ENCODE measurements at regions of chr15 and their contacts with region 1.

Region 1: DNA sequence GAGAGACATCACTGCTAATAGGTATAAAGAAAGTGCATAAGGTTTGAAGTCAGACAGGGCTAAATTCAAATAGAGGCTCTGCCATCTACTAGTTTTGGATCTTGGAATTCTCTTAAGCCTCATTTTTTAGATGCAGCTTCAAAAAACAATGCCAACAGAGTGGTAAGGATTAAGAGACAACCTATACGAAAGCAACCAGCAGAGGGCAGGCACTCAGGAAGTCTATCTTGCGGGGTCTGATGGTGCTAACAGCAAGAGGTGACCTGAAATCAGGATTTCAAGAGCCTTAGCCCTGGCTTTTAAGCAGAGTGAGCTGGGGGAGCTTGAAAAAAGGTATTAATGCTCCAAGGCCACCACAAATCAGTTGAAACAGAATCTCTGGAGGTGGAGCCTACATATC is 40.7 kb downstream of the LDHAL6B start:
- DNase-seq: no peak
- ATAC-seq: peak; percentile 52
- H3K4me3 Mint-ChIP-seq: no peak overlapping the region
- H3K27ac Mint-ChIP-seq: peak overlapping the region; percentile 24
- H3K4me1 Mint-ChIP-seq: peaks cover 71% of the 10 kb centered on the region
- H3K27me3 Mint-ChIP-seq: no peaks in the 10 kb centered on the region
- CTCF ChIP-seq: no peak

Region 2: GRCh38 chr15:58357521-58358476 is 889.6 kb before region 1 on chr15:
- CTCF ChIA-PET with region 1: no interaction called
- POLR2A ChIA-PET with region 1: no interaction called
- intact Hi-C with region 1: no loop called
- DNase-seq: no peak
- ATAC-seq: no peak
- H3K4me3 Mint-ChIP-seq: no peak overlapping the region
- H3K27ac Mint-ChIP-seq: no peak overlapping the region
- H3K4me1 Mint-ChIP-seq: no peaks in the 10 kb centered on the region
- H3K27me3 Mint-ChIP-seq: peaks cover 23% of the 10 kb centered on the region
- CTCF ChIP-seq: no peak

Region 3: DNA sequence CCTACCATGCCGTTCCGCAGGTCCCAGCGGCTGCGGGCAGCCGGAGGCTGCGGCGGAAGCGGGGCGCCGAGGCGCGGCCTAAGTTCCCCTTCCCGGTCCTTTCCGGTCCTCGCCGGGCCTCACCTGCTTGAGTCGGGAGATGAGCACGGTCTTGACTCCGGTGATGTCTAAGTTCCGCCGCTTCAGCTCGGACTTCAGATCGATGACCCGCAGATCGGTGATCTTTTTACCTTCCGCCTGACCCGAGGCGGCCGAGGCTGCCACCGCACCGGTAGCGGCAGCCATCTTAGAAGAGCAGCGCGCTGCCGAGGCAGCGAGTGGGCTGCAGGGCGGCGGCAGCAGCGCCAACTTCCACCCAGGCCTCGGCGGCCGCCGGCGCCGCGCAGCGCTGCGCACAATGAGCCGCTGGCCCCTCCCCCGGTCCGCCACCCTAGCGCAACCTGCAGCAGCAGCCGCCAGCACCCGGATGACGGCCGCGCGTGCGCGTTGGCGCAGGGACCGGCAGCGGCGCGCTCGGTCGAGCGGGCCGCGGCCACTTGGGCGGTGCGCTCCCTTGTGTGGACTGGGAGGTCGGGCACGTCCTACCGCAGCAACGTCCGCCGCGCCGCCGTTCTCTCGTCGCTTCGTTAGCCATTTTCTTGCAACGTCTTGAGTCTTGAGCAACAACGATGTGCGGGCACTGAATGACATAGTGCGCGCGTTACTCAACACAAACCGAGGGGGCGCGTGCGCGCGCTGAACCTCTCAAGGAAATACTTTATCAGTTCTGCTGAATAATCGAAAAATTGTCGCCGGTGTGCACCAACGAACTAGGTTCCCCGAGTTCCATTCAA is 313.9 kb before region 1 on chr15 and contains the start of gene SLTM:
- CTCF ChIA-PET with region 1: no interaction called
- POLR2A ChIA-PET with region 1: no interaction called
- intact Hi-C with region 1: loop called (anchors 5 kb)
- DNase-seq: peak; percentile 87
- ATAC-seq: peak; percentile 91
- H3K4me3 Mint-ChIP-seq: peak within 1 kb of the TSS; percentile 99
- H3K27ac Mint-ChIP-seq: peak within 1 kb of the TSS; percentile 100
- H3K4me1 Mint-ChIP-seq: peaks cover 29% of the 10 kb centered on the region
- H3K27me3 Mint-ChIP-seq: no peaks in the 10 kb centered on the region
- CTCF ChIP-seq: no peak
- total RNA-seq, gene SLTM: 124 and 159 TPM in 2 replicates

Region 4: GRCh38 chr15:59290295-59291212 is 43.2 kb after region 1 on chr15:
- CTCF ChIA-PET with region 1: interaction called, 9 read pairs
- POLR2A ChIA-PET with region 1: interaction called, 3 read pairs
- intact Hi-C with region 1: loop called (anchors 2 kb)
- DNase-seq: no peak
- ATAC-seq: peak; percentile 59
- H3K4me3 Mint-ChIP-seq: peak overlapping the region; percentile 64
- H3K27ac Mint-ChIP-seq: peak overlapping the region; percentile 56
- H3K4me1 Mint-ChIP-seq: peaks cover 61% of the 10 kb centered on the region
- H3K27me3 Mint-ChIP-seq: no peaks in the 10 kb centered on the region
- CTCF ChIP-seq: no peak

Region 5: GRCh38 chr15:59349680-59350420 is 102.5 kb after region 1 on chr15:
- CTCF ChIA-PET with region 1: interaction called, 3 read pairs
- POLR2A ChIA-PET with region 1: interaction called, 4 read pairs
- intact Hi-C with region 1: loop called (anchors 5 kb)
- DNase-seq: no peak
- ATAC-seq: peak; percentile 62
- H3K4me3 Mint-ChIP-seq: no peak overlapping the region
- H3K27ac Mint-ChIP-seq: peak overlapping the region; percentile 66
- H3K4me1 Mint-ChIP-seq: peaks cover 92% of the 10 kb centered on the region
- H3K27me3 Mint-ChIP-seq: no peaks in the 10 kb centered on the region
- CTCF ChIP-seq: no peak

Region 6: DNA sequence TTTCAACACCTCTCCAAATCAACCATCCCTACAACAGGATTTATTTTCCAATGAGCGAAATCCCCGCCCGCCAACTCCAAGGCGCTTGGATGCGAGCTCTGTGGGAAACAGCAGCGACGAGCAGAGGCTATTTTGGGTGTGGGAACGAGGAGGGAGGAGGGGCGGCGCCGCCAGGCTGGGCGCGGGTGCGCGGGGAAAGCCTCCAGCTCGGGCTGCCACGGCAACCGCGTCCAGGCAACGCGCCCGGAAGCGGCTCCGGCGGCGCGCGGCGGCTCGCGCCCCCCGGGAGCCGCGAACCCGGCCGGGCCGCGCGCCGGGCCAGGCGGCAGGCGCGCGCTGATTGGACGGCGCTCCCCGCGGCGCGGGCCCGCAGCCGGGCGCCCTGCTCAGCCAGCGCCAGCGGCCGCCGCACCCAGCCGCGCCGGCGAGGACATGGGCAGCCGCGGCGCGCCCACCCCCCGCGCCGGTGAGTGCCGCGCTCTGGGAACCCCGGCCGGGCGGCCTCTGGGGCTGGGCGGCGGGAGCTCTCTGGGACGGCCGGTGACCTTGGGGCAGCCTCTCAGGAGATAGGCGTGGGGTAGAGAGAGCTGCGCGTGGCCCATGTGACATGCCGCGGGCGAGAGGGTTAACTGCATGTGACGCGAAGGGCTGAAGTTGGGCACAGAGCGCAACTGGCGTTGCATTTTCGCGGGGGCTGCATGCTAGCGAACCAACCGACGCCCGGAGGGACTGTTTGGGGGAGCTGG is 190.6 kb after region 1 on chr15 and contains the start of gene FAM81A:
- CTCF ChIA-PET with region 1: interaction called, 3 read pairs
- POLR2A ChIA-PET with region 1: interaction called, 3 read pairs
- intact Hi-C with region 1: loop called (anchors 1 kb)
- DNase-seq: peak; percentile 65
- ATAC-seq: peak; percentile 82
- H3K4me3 Mint-ChIP-seq: peak within 1 kb of the TSS; percentile 88
- H3K27ac Mint-ChIP-seq: peak within 1 kb of the TSS; percentile 65
- H3K4me1 Mint-ChIP-seq: peaks cover 42% of the 10 kb centered on the region
- H3K27me3 Mint-ChIP-seq: peaks cover 3% of the 10 kb centered on the region
- CTCF ChIP-seq: no peak
- total RNA-seq, gene FAM81A: 4.8 and 6.2 TPM in 2 replicates

Region 7: GRCh38 chr15:59492389-59493377 is 245.3 kb after region 1 on chr15:
- CTCF ChIA-PET with region 1: interaction called, 50 read pairs
- POLR2A ChIA-PET with region 1: interaction called, 3 read pairs
- intact Hi-C with region 1: loop called (anchors 1 kb)
- DNase-seq: peak; percentile 31
- ATAC-seq: peak; percentile 93
- H3K4me3 Mint-ChIP-seq: no peak overlapping the region
- H3K27ac Mint-ChIP-seq: peak overlapping the region; percentile 1
- H3K4me1 Mint-ChIP-seq: peaks cover 10% of the 10 kb centered on the region
- H3K27me3 Mint-ChIP-seq: no peaks in the 10 kb centered on the region
- CTCF ChIP-seq: peak; percentile 87